Breast epithelium (tissue), 4 donors: ENCODE measurements at regions of chr4 and their contacts with region 1.

Region 1: DNA sequence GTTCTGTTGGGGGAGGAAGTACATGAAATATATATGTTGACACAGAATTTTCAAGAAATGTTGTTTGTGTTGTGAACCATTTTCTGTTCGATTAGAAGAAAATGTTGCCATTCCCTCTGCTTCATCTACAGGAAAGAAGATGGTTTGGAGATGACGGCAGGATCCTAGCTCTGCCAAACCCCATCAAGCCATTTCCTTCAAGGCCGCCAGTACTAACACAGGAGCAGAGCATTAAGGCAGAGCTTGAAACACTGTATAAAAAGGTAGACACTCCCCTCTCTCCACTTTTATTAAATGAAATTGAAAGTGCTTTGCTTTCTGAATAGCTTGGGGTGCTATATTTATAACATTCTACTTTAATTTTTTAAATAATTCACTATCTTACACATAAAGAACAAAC is 46.8 kb downstream of the CC2D2A start:
- DNase-seq: no peak
- H3K4me3 ChIP-seq: no peak overlapping the region
- H3K27ac ChIP-seq: no peak overlapping the region
- H3K4me1 ChIP-seq: no peaks in the 10 kb centered on the region
- H3K27me3 ChIP-seq: no peaks in the 10 kb centered on the region
- CTCF ChIP-seq: no peak
- POLR2A ChIP-seq: no peak

Region 2: DNA sequence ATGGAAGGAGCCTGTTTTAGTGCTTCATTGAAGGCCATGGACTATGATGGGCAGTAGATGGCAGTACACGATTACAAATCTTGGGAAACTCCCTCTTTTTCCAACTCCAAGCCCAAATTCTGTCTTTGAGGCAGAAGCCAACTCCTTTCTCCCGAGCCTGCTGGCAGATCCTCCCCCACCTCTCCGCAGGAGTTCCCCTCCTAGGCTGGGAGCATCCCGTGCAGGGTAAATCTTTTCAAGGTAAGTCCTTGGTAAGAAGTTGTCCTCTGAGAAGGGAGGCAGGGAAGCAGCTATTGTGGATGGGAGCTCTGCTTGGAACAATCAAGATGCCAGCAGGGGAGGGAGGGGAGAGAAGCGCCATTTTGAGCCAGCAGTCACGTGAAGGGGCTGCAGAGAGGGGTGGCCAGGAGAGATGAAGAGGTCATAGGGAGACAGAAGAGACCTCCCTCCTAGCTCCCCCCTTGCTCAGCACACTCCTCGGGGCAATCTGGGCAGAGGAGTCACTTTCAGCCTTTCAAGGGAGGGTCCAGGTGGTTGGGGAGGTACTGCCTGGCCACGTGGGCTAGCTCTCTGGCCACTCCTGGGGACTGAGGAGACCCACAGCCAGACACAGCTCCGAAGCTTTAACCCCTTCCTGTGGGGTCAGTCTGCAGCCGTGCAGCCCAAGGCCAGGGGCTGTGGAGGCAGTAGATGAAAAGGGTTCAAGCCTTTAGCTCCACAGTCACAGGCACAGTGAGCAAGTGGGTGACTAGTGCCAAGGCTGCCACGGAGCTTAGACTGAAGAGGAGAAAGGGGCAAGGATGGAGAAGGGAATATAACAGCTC is 37.2 kb before region 1 on chr4:
- intact Hi-C with region 1: no loop called
- DNase-seq: peak in 1 of 2 donors; percentile 25
- H3K4me3 ChIP-seq: peak overlapping the region; percentile 34 to 58 (median 50)
- H3K27ac ChIP-seq: peak overlapping the region; percentile 56 to 94
- H3K4me1 ChIP-seq: no peaks in the 10 kb centered on the region
- H3K27me3 ChIP-seq: no peaks in the 10 kb centered on the region
- CTCF ChIP-seq: peak in 2 of 3 donors; percentile 61 to 63
- POLR2A ChIP-seq: no peak

Region 3: GRCh38 chr4:15577508-15577907 is 61.0 kb after region 1 on chr4:
- intact Hi-C with region 1: loop called (anchors 2 kb)
- DNase-seq: no peak
- H3K4me3 ChIP-seq: no peak overlapping the region
- H3K27ac ChIP-seq: no peak overlapping the region
- H3K4me1 ChIP-seq: no peaks in the 10 kb centered on the region
- H3K27me3 ChIP-seq: no peaks in the 10 kb centered on the region
- CTCF ChIP-seq: no peak
- POLR2A ChIP-seq: no peak